Left ventricle myocardium inferior (tissue), 1 donor: ENCODE measurements at regions of chr19 and their contacts with region 1.

Region 1: DNA sequence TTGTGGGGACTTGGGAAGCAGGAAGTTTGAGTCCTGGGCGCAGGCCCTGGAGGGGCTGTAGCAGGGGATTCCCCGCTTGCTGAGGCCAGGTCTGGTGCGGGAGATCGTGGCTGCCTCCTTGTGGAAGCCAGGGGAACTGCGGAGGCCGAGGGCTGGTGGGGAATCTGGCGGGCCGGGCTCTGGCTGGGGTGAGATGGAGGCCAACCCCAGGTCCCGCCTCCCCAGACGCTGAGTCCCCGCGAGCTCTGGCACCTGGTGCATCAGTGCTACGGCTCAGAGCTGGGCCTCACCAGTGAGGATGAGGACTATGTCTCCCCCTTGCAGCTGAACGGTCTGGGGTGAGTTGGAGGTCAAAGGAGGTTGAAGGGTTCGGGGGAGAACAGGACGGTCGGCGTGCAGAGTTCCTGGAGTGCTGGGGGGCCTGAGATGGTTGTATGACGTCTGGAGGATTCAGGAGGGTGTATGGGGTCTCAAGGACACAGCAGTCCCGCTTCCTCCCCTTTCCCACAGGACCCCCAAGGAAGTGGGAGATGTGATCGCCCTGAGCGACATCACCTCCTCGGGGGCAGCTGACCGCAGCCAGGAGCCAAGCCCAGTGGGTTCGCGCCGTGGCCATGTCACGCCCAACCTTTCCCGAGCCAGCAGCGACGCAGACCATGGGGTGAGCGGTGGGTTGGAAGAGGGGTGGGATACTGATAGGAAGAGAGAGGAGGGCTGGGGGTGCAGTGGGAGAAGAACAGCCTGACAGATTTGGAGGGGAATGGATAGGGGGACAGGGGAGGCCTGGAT is 13.1 kb downstream of the GRAMD1A start:
- DNase-seq: peak; percentile 76
- H3K4me3 ChIP-seq: no peak overlapping the region
- H3K27ac ChIP-seq: peak overlapping the region; percentile 58
- H3K4me1 ChIP-seq: peaks cover 37% of the 10 kb centered on the region
- H3K27me3 ChIP-seq: no peaks in the 10 kb centered on the region
- CTCF ChIP-seq: peak; percentile 97

Region 2: DNA sequence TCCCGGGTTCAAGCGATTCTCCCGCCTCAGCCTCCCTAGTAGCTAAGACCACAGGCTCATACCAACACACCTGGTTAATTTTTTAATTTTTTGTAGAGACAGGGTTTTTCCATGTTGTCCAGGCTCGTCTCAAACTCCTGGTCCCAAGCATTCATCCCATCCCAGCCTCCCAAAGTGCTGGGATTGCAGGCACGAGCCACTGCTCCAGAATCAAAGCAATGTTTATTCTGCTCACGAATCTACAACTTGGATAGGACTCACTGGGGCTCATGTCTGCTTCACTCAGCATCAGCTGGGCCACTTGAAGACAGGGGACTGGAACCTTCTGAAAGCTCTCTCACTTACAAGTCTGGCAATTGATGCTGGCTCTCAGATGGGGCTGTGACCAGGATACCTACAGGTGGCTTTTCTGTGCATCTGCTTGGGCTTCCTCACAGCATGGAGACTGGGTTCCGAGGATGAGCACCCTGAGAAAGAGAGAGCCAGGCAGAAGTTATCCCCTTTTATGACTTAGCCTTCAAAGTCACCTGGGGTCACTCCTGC is 41.0 kb before region 1 on chr19:
- intact Hi-C with region 1: loop called (anchors 2 kb)
- DNase-seq: no peak
- H3K4me3 ChIP-seq: no peak overlapping the region
- H3K27ac ChIP-seq: no peak overlapping the region
- H3K4me1 ChIP-seq: peaks cover 4% of the 10 kb centered on the region
- H3K27me3 ChIP-seq: no peaks in the 10 kb centered on the region
- CTCF ChIP-seq: no peak

Region 3: DNA sequence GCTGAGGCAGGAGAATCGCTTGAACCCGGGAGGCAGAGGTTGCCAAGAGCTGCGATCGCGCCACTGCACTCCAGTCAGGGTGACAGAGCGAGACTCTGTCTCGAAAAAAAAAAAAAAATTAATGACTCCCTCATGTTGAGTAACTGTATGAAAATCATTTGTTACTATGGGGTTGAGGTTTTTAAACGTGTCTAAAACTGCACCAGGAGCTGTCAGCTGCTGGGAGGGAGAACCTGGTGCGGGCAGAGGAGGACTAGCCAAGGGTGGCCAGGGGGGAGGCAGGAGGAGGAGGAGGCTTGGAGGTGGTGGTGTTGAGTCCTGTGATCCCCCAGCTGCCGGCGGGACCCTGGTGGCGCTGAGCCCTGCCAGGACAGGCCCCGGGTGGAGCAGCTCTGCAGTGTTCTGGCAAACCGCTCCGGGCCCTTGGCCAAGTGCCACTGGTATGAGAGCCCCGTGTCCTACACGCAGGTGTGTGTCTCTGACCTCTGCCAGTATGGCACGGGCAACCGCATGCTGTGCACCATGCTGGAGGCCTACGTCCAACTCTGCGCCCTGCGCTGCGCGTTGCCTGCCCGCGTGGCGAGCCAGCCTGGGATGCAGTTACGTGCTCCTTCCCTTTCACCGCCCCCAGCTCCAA is 85.3 kb after region 1 on chr19:
- intact Hi-C with region 1: no loop called
- DNase-seq: peak; percentile 57
- H3K4me3 ChIP-seq: no peak overlapping the region
- H3K27ac ChIP-seq: no peak overlapping the region
- H3K4me1 ChIP-seq: peaks cover 4% of the 10 kb centered on the region
- H3K27me3 ChIP-seq: no peaks in the 10 kb centered on the region
- CTCF ChIP-seq: no peak